MCF 10A (cell line): ENCODE measurements at regions of chr1 and their contacts with region 1.

Region 1: DNA sequence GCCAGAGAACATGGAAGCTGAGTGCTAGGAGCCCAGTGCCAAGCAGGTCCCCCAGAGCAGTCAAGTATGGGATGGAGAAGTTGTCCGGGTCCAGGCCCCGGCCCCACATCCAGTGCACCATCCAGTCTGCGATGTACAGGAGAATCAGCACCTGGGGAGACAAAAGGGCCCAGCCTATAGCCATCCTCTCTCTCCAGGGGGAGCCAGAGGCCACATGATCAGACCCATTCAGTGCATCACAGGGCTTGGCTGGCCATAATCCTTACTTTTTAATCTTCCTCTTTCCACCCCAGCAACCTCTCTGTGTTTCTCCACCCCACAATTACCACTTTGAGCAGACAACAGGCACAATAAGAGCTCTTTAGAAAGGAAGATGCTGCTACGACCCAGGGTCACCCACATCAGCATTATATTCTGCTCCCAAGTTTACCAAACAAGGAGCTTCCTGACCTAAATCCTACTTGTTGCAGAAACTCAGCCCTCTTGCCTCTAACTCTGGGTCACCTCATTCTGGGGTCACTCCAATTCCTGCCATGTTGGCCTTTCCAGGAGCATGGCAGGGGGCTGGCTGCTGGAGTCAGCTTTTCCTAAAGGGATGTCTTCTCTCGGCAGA is 16.4 kb upstream of the RAB29 start:
- DNase-seq: peak; percentile 89
- H3K4me3 Mint-ChIP-seq: no peak overlapping the region
- H3K27ac Mint-ChIP-seq: no peak overlapping the region
- H3K4me1 Mint-ChIP-seq: no peaks in the 10 kb centered on the region
- H3K27me3 Mint-ChIP-seq: no peaks in the 10 kb centered on the region
- CTCF ChIP-seq: peak; percentile 99

Region 2: GRCh38 chr1:204670152-204670927 is 1121.3 kb before region 1 on chr1:
- CTCF ChIA-PET with region 1: no interaction called
- POLR2A ChIA-PET with region 1: no interaction called
- intact Hi-C with region 1: no loop called
- DNase-seq: peak; percentile 60
- H3K4me3 Mint-ChIP-seq: no peak overlapping the region
- H3K27ac Mint-ChIP-seq: no peak overlapping the region
- H3K4me1 Mint-ChIP-seq: no peaks in the 10 kb centered on the region
- H3K27me3 Mint-ChIP-seq: peaks cover 1% of the 10 kb centered on the region
- CTCF ChIP-seq: no peak

Region 3: GRCh38 chr1:205610036-205610435 is 181.6 kb before region 1 on chr1:
- CTCF ChIA-PET with region 1: no interaction called
- POLR2A ChIA-PET with region 1: no interaction called
- intact Hi-C with region 1: no loop called
- DNase-seq: no peak
- H3K4me3 Mint-ChIP-seq: no peak overlapping the region
- H3K27ac Mint-ChIP-seq: peak overlapping the region; percentile 65
- H3K4me1 Mint-ChIP-seq: peaks cover 23% of the 10 kb centered on the region
- H3K27me3 Mint-ChIP-seq: no peaks in the 10 kb centered on the region
- CTCF ChIP-seq: no peak

Region 4: GRCh38 chr1:205805082-205805712 is 13.5 kb after region 1 on chr1:
- CTCF ChIA-PET with region 1: interaction called, 54 read pairs
- POLR2A ChIA-PET with region 1: interaction called, 3 read pairs
- intact Hi-C with region 1: no loop called
- DNase-seq: peak; percentile 69
- H3K4me3 Mint-ChIP-seq: no peak overlapping the region
- H3K27ac Mint-ChIP-seq: peak overlapping the region; percentile 41
- H3K4me1 Mint-ChIP-seq: peaks cover 27% of the 10 kb centered on the region
- H3K27me3 Mint-ChIP-seq: no peaks in the 10 kb centered on the region
- CTCF ChIP-seq: no peak

Region 5: GRCh38 chr1:205827623-205828022 is 35.9 kb after region 1 on chr1:
- CTCF ChIA-PET with region 1: interaction called, 24 read pairs
- POLR2A ChIA-PET with region 1: no interaction called
- intact Hi-C with region 1: no loop called
- DNase-seq: peak; percentile 36
- H3K4me3 Mint-ChIP-seq: no peak overlapping the region
- H3K27ac Mint-ChIP-seq: no peak overlapping the region
- H3K4me1 Mint-ChIP-seq: no peaks in the 10 kb centered on the region
- H3K27me3 Mint-ChIP-seq: peaks cover 31% of the 10 kb centered on the region
- CTCF ChIP-seq: no peak

Region 6: DNA sequence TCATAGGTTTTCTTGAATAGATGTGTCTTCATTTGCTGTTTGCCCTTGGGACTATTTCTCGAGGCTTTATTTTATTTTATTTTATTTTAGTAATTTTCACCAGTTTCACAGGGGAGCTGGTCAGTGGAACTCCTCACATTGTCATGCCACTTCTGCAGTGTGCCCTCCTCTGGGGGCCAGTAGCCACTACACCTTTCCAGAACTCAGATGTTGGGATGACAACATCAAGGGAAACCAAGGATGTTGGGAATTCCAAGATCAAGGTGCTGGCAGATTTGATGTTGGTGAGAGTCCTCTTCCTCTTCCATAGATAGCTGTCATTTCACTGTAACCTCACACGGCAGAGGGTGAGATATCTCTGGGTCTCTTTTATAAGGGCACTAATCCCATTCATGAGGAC is 116.1 kb after region 1 on chr1:
- CTCF ChIA-PET with region 1: interaction called, 75 read pairs
- POLR2A ChIA-PET with region 1: interaction called, 3 read pairs
- intact Hi-C with region 1: loop called (anchors 1 kb)
- DNase-seq: peak; percentile 86
- H3K4me3 Mint-ChIP-seq: no peak overlapping the region
- H3K27ac Mint-ChIP-seq: peak overlapping the region; percentile 11
- H3K4me1 Mint-ChIP-seq: peaks cover 13% of the 10 kb centered on the region
- H3K27me3 Mint-ChIP-seq: peaks cover 28% of the 10 kb centered on the region
- CTCF ChIP-seq: peak; percentile 93